B cell (primary cell): ENCODE measurements at regions of chr5 and their contacts with region 1.

Region 1: GRCh38 chr5:158695595-158696330 is 404.0 kb downstream of the EBF1 start:
- DNase-seq: peak; percentile 89
- ATAC-seq: peak; percentile 95
- H3K4me3 ChIP-seq: no peak overlapping the region
- H3K4me3 Mint-ChIP-seq: peak overlapping the region; percentile 35
- H3K27ac ChIP-seq: peak overlapping the region in 1 of 2 donors; percentile 53
- H3K27ac Mint-ChIP-seq: peak overlapping the region; percentile 28
- H3K4me1 ChIP-seq: peaks cover 17% of the 10 kb centered on the region in 2 donors
- H3K4me1 Mint-ChIP-seq: peaks cover 25% of the 10 kb centered on the region
- H3K27me3 ChIP-seq: no peaks in the 10 kb centered on the region
- H3K27me3 Mint-ChIP-seq: no peaks in the 10 kb centered on the region
- CTCF ChIP-seq: peak; percentile 99

Region 2: DNA sequence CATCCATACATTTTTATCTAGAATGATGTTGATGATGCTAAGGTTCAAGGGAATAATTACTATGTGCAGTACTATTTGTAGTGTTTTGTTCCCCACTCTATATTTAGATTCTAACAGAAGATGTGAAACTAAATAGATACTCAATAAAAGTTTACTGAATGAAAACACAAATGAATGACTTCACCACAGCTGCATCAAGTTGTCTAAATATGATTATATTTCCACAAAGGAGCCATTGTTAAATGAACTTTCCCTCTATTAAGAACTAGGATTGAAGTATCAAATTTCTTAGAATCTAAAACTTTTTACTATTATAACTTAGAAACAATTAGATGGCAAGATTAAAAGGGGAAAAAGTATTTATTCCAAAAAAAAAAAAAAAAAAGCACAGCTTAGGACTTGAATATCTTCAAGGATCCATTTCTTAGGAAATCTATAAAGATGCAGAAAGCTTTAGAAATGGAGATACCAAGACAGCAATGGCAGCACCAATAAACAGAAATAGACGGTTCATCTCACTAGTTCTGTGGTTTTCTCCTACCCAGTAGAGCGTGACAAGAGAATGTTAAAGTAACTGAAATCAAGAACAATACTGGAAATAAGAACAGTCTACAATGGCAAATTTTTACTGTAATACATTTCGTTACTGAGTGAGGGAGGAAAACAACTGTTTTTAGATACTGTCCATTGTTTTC is 56.3 kb after region 1 on chr5:
- CTCF ChIA-PET with region 1: interaction called, 9 read pairs
- POLR2A ChIA-PET with region 1: no interaction called
- intact Hi-C with region 1: loop called (anchors 5 kb)
- DNase-seq: peak; percentile 79
- ATAC-seq: peak; percentile 80
- H3K4me3 ChIP-seq: peak overlapping the region; percentile 23 to 62 (median 34)
- H3K4me3 Mint-ChIP-seq: peak overlapping the region; percentile 87
- H3K27ac ChIP-seq: peak overlapping the region; percentile 78 to 81
- H3K27ac Mint-ChIP-seq: peak overlapping the region; percentile 67
- H3K4me1 ChIP-seq: peaks cover 60 to 70% of the 10 kb centered on the region in 2 donors
- H3K4me1 Mint-ChIP-seq: peaks cover 91% of the 10 kb centered on the region
- H3K27me3 ChIP-seq: no peaks in the 10 kb centered on the region
- H3K27me3 Mint-ChIP-seq: no peaks in the 10 kb centered on the region
- CTCF ChIP-seq: no peak

Region 3: DNA sequence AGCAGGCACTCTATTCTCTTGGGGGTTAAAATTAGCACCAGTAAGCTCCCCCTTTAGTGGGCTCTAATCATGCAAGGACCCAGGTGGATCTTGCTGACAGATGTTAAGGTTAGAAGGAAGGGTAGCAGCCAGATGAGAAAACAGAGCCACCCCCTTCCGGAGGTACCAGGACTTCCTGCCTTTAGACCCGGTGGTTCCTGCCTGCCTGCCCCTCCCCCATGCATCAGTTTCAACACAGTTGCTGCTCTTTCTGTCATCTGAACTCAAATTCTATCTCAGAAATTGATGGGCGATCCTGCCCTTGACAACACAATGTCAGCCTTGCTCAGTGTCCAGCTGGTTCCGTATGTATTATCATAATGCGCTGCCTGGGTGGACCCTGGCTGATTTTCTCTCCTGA is 116.6 kb after region 1 on chr5:
- CTCF ChIA-PET with region 1: interaction called, 7 read pairs
- POLR2A ChIA-PET with region 1: no interaction called
- intact Hi-C with region 1: loop called (anchors 5 kb)
- DNase-seq: peak; percentile 89
- ATAC-seq: peak; percentile 89
- H3K4me3 ChIP-seq: peak overlapping the region in 2 of 5 experiments; percentile 32 to 43
- H3K4me3 Mint-ChIP-seq: peak overlapping the region; percentile 72
- H3K27ac ChIP-seq: peak overlapping the region; percentile 80 to 87
- H3K27ac Mint-ChIP-seq: peak overlapping the region; percentile 93
- H3K4me1 ChIP-seq: peaks cover 89 to 100% of the 10 kb centered on the region in 2 donors
- H3K4me1 Mint-ChIP-seq: peaks cover 98% of the 10 kb centered on the region
- H3K27me3 ChIP-seq: no peaks in the 10 kb centered on the region
- H3K27me3 Mint-ChIP-seq: no peaks in the 10 kb centered on the region
- CTCF ChIP-seq: no peak

Region 4: DNA sequence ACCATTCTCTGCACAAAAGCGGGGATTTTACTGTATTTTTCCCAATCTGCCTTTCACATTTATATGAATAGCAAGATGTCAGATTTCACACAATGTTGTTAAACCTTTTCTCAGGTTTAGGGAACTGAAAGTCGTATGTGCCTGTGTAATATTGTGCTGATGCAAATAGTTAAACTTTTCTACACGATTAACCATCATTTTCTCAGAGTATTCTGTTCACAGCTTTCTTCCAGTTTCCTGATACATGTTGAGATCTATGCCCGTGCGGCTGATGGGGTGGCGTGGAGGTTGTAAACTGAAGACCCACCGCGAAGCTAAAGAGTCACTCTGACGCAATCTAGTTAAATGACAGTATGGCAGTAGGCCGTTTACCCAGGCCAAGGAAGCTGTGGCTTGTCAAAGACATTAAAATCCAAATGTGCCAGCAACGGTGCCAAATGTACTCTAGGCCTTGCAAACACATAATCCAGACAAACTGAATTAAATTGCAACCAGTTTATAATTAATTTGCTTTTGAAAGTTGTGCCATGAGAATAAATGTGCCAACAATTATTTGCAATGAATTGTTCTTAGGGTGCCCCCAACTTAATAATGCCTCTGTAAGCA is 258.3 kb after region 1 on chr5:
- CTCF ChIA-PET with region 1: interaction called, 11 read pairs
- POLR2A ChIA-PET with region 1: no interaction called
- intact Hi-C with region 1: loop called (anchors 5 kb)
- DNase-seq: peak; percentile 89
- ATAC-seq: peak; percentile 79
- H3K4me3 ChIP-seq: peak overlapping the region in 4 of 5 experiments; percentile 1 to 51 (median 20)
- H3K4me3 Mint-ChIP-seq: peak overlapping the region; percentile 68
- H3K27ac ChIP-seq: peak overlapping the region; percentile 82 to 84
- H3K27ac Mint-ChIP-seq: peak overlapping the region; percentile 88
- H3K4me1 ChIP-seq: peaks cover 91 to 93% of the 10 kb centered on the region in 2 donors
- H3K4me1 Mint-ChIP-seq: peaks cover 94% of the 10 kb centered on the region
- H3K27me3 ChIP-seq: no peaks in the 10 kb centered on the region
- H3K27me3 Mint-ChIP-seq: no peaks in the 10 kb centered on the region
- CTCF ChIP-seq: no peak

Region 5: GRCh38 chr5:159061179-159061796 is 365.5 kb after region 1 on chr5:
- CTCF ChIA-PET with region 1: interaction called, 10 read pairs
- POLR2A ChIA-PET with region 1: interaction called, 3 read pairs
- intact Hi-C with region 1: no loop called
- DNase-seq: no peak
- ATAC-seq: no peak
- H3K4me3 ChIP-seq: no peak overlapping the region
- H3K4me3 Mint-ChIP-seq: no peak overlapping the region
- H3K27ac ChIP-seq: no peak overlapping the region
- H3K27ac Mint-ChIP-seq: no peak overlapping the region
- H3K4me1 ChIP-seq: peaks cover 11 to 23% of the 10 kb centered on the region in 2 donors
- H3K4me1 Mint-ChIP-seq: peaks cover 74% of the 10 kb centered on the region
- H3K27me3 ChIP-seq: no peaks in the 10 kb centered on the region
- H3K27me3 Mint-ChIP-seq: no peaks in the 10 kb centered on the region
- CTCF ChIP-seq: no peak

Region 6: GRCh38 chr5:159106569-159107282 is 411.0 kb after region 1 on chr5:
- CTCF ChIA-PET with region 1: interaction called, 443 read pairs
- POLR2A ChIA-PET with region 1: interaction called, 23 read pairs
- intact Hi-C with region 1: loop called (anchors 1 kb)
- DNase-seq: peak; percentile 88
- ATAC-seq: peak; percentile 75
- H3K4me3 ChIP-seq: peak overlapping the region; percentile 44 to 70 (median 66)
- H3K4me3 Mint-ChIP-seq: peak overlapping the region; percentile 100
- H3K27ac ChIP-seq: no peak overlapping the region
- H3K27ac Mint-ChIP-seq: peak overlapping the region; percentile 87
- H3K4me1 ChIP-seq: peaks cover 42 to 48% of the 10 kb centered on the region in 2 donors
- H3K4me1 Mint-ChIP-seq: peaks cover 52% of the 10 kb centered on the region
- H3K27me3 ChIP-seq: no peaks in the 10 kb centered on the region
- H3K27me3 Mint-ChIP-seq: no peaks in the 10 kb centered on the region
- CTCF ChIP-seq: peak; percentile 98